ENCODE measurements at regions of chr3 and their contacts with region 1.

Region 1: DNA sequence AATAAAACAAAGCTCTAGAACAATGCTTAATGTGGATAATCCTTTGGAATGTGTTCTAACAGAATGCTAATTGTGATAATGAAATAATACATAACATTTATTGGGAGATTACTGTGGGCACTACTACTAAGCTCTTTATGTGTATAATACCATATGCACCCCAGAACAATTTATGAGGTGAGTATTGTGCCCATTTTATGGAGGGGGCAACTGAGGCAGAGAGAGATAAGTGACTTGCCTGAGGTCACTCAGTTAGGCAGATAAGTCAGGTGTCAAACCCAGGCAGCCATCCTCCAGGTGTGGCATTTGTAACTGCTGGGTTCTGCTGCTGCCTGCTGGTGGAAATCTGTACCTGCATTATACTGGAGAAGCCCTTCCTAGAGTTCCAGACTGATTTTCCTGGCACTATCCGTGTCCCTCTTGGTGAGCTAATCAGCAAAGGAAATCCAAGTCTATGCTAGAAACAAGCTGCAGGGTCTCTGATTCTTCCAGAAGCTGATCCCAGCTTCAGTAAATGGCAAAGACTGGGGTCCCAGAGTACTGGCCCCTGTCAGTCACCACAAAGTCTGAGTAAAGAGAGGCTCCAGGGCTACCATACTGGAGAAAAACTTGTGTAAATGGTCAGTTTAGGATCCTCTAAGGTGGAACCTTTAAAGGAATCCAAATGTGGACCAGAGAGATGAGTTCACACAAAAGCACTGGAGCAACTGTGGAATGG is 22.6 kb upstream of the RBP1 start:
- DNase-seq: peak; percentile 55
- H3K4me3 ChIP-seq: no peak overlapping the region; a peak in 1 of 4 replicates
- H3K27ac ChIP-seq: no peak overlapping the region
- H3K4me1 ChIP-seq: peaks cover 0 to 16% of the 10 kb centered on the region in 2 experiments; a peak in 2 of 4 replicates
- H3K27me3 ChIP-seq: no peaks in the 10 kb centered on the region
- CTCF ChIP-seq: peak; percentile 74
- EP300 ChIP-seq: no peak
- RAD21 ChIP-seq: peak; percentile 96

Region 2: DNA sequence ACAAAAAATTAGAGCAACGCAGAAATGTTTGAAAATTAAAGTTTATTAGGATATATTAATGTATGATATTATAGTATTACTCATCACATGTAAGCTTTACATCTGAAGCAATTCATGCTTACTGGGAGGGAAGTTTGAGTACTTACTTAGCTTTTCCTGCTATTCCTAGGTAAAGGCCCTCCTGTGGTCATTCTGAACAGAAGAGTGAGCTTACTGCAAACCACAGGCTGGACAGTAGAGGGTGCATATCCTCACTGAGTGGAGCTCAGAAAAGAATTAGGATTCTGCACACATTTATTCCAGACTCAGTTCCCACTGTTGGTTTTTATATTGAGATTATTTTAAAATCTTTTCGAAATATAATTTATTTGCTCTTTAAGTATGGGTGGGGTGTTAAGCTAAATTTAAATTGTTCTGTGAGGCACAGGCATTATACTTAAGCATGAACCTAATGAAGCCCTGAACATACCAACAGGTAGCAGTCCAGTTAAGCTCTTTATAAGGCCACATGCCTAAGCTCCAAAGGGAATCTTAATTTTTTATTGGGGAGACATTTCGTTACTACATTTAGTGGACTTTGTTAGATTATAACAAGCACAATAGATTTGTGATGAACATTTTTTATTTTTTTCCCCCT is 208.1 kb before region 1 on chr3:
- CTCF ChIA-PET with region 1: interaction called, 19 read pairs
- POLR2A ChIA-PET with region 1: no interaction called
- DNase-seq: peak; percentile 53
- H3K4me3 ChIP-seq: no peak overlapping the region; a peak in 1 of 4 replicates
- H3K27ac ChIP-seq: no peak overlapping the region; a peak in 1 of 4 replicates
- H3K4me1 ChIP-seq: peaks cover 0 to 6% of the 10 kb centered on the region in 2 experiments; a peak in 1 of 4 replicates
- H3K27me3 ChIP-seq: no peaks in the 10 kb centered on the region
- CTCF ChIP-seq: peak; percentile 80
- EP300 ChIP-seq: no peak
- RAD21 ChIP-seq: peak; percentile 52

Region 3: GRCh38 chr3:139427283-139427993 is 134.7 kb before region 1 on chr3:
- CTCF ChIA-PET with region 1: interaction called, 141 read pairs
- POLR2A ChIA-PET with region 1: interaction called, 6 read pairs
- DNase-seq: peak; percentile 69
- H3K4me3 ChIP-seq: peak overlapping the region in 1 of 2 experiments; percentile 24; a peak in 1 of 4 replicates
- H3K27ac ChIP-seq: no peak overlapping the region
- H3K4me1 ChIP-seq: no peaks in the 10 kb centered on the region
- H3K27me3 ChIP-seq: no peaks in the 10 kb centered on the region
- CTCF ChIP-seq: peak; percentile 90
- EP300 ChIP-seq: no peak
- RAD21 ChIP-seq: peak; percentile 96

Region 4: DNA sequence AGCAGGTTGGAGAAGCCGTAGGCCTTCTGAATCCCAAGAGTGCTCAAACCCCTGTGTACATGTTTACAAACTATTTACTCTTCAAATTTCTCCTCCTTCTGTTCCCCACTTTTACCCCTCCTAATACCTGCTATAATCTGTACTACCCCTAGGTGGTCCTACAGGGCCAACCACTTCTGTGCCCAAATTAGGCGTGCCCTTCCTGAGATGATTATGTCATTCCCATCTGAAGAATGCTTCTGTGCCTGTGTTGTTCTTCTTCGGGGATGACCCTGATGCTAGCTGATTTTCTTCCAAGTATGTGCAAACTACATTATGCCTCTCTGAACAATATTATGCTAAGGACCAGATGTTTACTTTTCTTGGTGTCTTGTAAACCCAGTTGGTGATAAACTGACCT is 106.3 kb before region 1 on chr3:
- CTCF ChIA-PET with region 1: interaction called, 12 read pairs
- POLR2A ChIA-PET with region 1: no interaction called
- DNase-seq: peak; percentile 26
- H3K4me3 ChIP-seq: no peak overlapping the region
- H3K27ac ChIP-seq: no peak overlapping the region
- H3K4me1 ChIP-seq: peaks cover 0 to 6% of the 10 kb centered on the region in 2 experiments; a peak in 2 of 4 replicates
- H3K27me3 ChIP-seq: no peaks in the 10 kb centered on the region
- CTCF ChIP-seq: 0 out of 2 replicates have a peak, but pooled peaks have one; percentile 16
- EP300 ChIP-seq: no peak
- RAD21 ChIP-seq: peak; percentile 22; the same call in 1 of the 2 replicates

Region 5: GRCh38 chr3:139533781-139534443 is 28.2 kb before region 1 on chr3:
- CTCF ChIA-PET with region 1: interaction called, 40 read pairs
- POLR2A ChIA-PET with region 1: interaction called, 6 read pairs
- DNase-seq: peak; percentile 71
- H3K4me3 ChIP-seq: no peak overlapping the region; a peak in 2 of 4 replicates
- H3K27ac ChIP-seq: peak overlapping the region; percentile 60 to 100
- H3K4me1 ChIP-seq: peaks cover 33 to 83% of the 10 kb centered on the region in 2 experiments
- H3K27me3 ChIP-seq: no peaks in the 10 kb centered on the region
- CTCF ChIP-seq: no peak
- EP300 ChIP-seq: 0 out of 4 replicates have a peak, but pooled peaks have one; percentile 3 to 12
- RAD21 ChIP-seq: no peak

Region 6: GRCh38 chr3:139597947-139598346 is 35.8 kb after region 1 on chr3:
- CTCF ChIA-PET with region 1: no interaction called
- POLR2A ChIA-PET with region 1: no interaction called
- DNase-seq: no peak
- H3K4me3 ChIP-seq: no peak overlapping the region
- H3K27ac ChIP-seq: no peak overlapping the region
- H3K4me1 ChIP-seq: no peaks in the 10 kb centered on the region
- H3K27me3 ChIP-seq: no peaks in the 10 kb centered on the region
- CTCF ChIP-seq: no peak
- EP300 ChIP-seq: no peak
- RAD21 ChIP-seq: no peak

Region 7: DNA sequence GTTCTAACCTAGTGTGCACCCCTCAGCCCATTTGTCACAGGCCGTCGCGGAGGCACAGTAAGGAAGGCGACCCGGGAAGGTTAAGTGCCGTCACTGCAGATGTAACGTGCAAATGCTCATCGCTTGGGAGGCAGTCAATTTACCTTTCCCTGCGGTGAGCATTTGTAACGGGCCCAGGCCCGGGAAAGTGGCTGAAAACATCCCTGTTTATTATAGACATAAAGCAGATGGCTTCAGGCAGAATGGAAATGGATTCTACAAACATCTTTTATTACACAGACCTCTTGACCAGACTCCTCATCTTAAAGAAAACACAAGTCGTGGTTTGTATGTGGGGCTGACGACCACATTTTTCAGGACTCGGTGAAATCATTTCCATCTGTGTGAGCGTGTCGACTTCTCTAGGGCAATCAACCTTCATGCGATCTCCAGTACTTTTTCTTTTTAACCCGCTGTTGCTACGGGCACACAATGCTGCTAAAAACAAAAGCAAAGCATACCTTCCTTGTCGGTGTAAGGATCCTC is 72.1 kb after region 1 on chr3:
- CTCF ChIA-PET with region 1: no interaction called
- POLR2A ChIA-PET with region 1: no interaction called
- DNase-seq: no peak
- H3K4me3 ChIP-seq: no peak overlapping the region
- H3K27ac ChIP-seq: no peak overlapping the region
- H3K4me1 ChIP-seq: no peaks in the 10 kb centered on the region; a peak in 1 of 4 replicates
- H3K27me3 ChIP-seq: no peaks in the 10 kb centered on the region
- CTCF ChIP-seq: no peak
- EP300 ChIP-seq: no peak
- RAD21 ChIP-seq: no peak